Astrocyte of the cerebellum (primary cell): ENCODE measurements at regions of chr9 and their contacts with region 1.

Region 1: GRCh38 chr9:71094708-71095251 is 26.6 kb downstream of the TRPM3 start:
- DNase-seq: no peak
- H3K4me3 ChIP-seq: no peak overlapping the region
- CTCF ChIP-seq: no peak

Region 2: GRCh38 chr9:71001780-71002386 is 92.9 kb before region 1 on chr9:
- in situ Hi-C with region 1: no loop called
- DNase-seq: peak; percentile 9
- H3K4me3 ChIP-seq: no peak overlapping the region
- CTCF ChIP-seq: peak; percentile 58

Region 3: GRCh38 chr9:71144495-71144894 is 49.7 kb after region 1 on chr9:
- in situ Hi-C with region 1: loop called (anchors 5 kb)
- DNase-seq: no peak
- H3K4me3 ChIP-seq: no peak overlapping the region
- CTCF ChIP-seq: no peak